GM13977 (cell line): ENCODE measurements at regions of chr1 and their contacts with region 1.

Region 1: GRCh38 chr1:30779294-30780071 is 21.9 kb upstream of the LAPTM5 start:
- DNase-seq: peak; percentile 89
- CTCF ChIP-seq: peak; percentile 96

Region 2: GRCh38 chr1:30719406-30720270 is 59.8 kb before region 1 on chr1:
- in situ Hi-C with region 1: loop called (anchors 10 kb)
- DNase-seq: no peak
- CTCF ChIP-seq: no peak

Region 3: DNA sequence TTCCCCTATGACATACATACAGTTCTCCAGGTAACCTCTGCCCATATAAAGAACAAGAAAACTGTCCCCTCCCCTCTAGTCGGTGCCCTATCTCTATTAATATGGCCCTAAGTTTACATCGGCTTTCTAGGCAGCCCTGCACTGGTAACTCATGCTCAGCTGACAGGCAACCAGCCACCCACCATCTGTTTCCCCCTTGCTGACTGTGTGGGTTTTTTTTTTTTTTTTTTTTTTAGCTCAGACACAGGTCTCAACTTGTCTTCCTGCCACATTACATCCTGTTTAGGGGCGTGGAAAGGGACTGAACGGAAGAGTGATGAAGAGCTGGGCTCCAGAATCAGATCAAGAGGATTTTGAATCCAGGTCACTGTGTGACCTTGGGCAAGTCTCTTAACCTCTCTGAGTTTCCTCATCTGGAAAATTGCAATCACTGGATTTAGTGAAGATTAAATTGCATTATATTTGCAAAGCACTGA is 35.9 kb before region 1 on chr1:
- in situ Hi-C with region 1: loop called (anchors 5 kb)
- DNase-seq: peak; percentile 78
- CTCF ChIP-seq: no peak